ENCODE measurements at regions of chr16 and their contacts with region 1.

Region 1: DNA sequence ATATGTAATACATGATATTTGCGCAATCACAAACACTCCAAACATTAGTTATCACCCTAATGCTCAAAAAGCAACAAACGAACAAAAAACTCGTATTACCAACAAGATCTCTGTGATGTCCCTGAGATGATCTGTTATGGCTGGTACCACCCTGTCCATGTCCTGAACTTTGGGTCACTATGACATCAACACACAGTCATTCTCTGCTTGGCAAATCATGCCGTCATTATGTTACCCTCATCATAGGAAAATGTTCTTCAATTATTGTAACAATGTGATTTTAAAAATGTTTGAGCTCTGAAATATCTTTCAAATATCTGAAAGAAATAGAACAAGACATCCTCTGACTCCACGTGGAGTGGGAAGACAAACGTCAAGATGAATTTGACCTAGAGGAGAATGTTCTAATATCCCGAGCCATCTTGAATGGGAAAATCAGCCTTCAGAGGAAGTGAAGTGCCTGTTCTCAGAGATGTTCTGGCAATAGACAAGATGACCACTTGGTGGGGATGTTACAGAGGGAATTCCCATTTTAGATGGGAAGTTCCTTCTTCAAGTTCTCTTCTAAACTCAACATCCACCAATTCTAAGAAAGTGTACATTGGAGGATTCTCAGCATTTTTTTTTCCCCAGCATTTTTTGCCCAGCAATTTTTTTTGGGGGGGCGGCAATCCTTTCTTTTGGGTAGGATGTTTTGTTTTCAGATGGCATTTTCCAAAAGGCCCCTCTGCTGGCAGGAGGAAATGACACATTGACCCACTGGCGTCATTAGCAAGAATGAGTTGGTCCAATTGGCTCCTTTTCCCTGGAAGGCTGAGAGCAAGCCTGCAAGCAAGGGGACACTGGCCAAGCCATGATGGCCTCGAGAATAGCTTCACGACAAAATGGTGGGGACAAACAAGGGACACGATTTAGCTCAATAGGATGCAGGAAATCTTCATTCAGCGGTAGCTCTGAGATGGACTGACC is 3.7 kb upstream of the HSD17B2 start:
- DNase-seq: peak; percentile 81
- H3K4me3 ChIP-seq: no peak overlapping the region
- CTCF ChIP-seq: peak; percentile 80

Region 2: DNA sequence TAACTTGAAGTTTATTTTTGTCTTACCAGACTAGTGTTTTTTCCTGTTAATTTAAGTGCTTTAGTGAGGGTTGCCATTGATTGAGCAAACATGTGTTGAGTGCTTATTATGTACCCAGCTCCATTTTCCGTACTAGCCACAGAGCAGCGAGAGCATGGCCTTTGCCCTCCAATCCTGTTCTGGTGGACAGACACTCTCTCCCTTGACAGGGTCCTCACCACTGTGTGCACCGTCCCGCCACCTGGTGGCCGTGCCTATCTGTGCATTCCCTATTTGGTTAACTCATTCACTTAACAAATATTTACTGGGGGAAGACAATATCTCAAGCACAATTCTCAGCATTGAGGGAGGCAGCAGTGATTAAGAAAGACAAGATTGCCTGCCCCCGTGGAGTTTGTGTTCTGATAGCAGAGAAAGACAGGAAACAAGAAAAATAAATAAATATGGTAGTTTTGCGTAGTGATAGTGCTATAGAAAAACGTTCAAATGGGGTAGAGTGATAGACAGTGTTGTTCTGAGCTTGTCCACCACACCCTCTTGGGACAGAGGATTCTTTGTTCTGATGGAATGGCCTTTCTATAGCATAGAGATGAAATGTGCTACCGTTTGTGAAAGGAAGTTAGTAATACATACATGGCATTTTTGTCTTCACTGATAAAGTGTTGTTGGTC is 608.4 kb after region 1 on chr16:
- in situ Hi-C with region 1: loop called (anchors 25 kb)
- DNase-seq: no peak
- H3K4me3 ChIP-seq: no peak overlapping the region
- CTCF ChIP-seq: peak; percentile 89

Measured in astrocyte of the cerebellum (primary cell).